SK-N-SH (cell line): ENCODE measurements at regions of chr2 and their contacts with region 1.

Region 1: DNA sequence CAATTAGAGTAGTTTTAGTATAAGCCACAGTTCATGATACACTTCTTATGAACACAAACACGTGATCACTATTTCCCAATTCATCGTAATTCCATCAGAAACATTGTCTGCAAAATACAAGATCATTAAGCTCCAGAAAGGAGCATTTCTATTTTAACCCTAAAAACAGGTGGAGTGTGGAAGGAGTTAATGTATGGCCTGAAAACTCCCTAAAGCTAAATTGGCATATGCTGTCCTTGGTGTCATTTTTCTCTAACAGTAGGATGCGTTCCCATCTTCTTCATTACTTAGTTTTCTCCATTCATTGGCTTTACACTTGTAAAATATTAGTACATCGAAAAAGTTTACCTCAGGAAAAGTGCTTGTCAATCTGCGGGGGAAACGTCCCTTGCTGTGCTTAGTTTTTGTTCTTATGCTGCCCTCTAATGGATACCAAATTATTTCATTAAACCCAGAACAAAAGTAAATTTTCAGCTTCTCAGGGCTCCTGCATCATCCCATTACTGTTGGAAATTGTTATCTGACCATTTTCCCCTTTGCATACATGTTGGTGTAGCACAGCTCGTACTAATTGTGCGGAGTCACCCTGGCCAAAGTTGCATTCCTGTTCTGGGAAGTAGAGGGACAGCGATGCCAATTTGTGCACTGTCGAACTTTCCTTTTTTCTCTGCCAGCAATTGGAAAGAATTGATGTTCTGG is 153.4 kb downstream of the GPD2 start:
- DNase-seq: peak; percentile 15
- H3K4me3 ChIP-seq: no peak overlapping the region
- H3K27ac ChIP-seq: no peak overlapping the region
- H3K4me1 ChIP-seq: no peaks in the 10 kb centered on the region
- H3K27me3 ChIP-seq: no peaks in the 10 kb centered on the region
- CTCF ChIP-seq: peak; percentile 72
- EP300 ChIP-seq: no peak
- RAD21 ChIP-seq: peak; percentile 86

Region 2: DNA sequence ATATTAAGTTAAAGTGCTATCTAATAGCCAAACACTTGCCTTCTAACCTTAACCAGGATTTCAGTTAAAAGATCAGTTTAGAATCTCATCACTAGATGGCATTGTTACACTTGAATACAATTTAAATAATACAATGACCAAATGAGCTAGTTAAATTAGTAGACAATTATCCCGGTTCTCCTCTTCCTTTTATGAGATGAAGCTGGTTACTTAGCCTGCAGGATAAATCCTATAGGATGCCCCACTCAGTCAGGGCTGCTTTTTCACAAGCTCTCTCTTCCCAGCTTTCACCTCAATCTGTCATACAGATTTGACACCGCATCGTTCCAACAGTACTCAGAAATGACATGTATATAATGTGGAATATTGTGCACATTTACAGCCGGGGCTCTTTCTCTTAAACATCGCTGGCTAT is 1212.3 kb before region 1 on chr2:
- CTCF ChIA-PET with region 1: interaction called, 24 read pairs
- POLR2A ChIA-PET with region 1: no interaction called
- DNase-seq: no peak
- H3K4me3 ChIP-seq: no peak overlapping the region
- H3K27ac ChIP-seq: no peak overlapping the region
- H3K4me1 ChIP-seq: no peaks in the 10 kb centered on the region
- H3K27me3 ChIP-seq: no peaks in the 10 kb centered on the region
- CTCF ChIP-seq: peak; percentile 60
- EP300 ChIP-seq: no peak
- RAD21 ChIP-seq: peak; percentile 65

Region 3: DNA sequence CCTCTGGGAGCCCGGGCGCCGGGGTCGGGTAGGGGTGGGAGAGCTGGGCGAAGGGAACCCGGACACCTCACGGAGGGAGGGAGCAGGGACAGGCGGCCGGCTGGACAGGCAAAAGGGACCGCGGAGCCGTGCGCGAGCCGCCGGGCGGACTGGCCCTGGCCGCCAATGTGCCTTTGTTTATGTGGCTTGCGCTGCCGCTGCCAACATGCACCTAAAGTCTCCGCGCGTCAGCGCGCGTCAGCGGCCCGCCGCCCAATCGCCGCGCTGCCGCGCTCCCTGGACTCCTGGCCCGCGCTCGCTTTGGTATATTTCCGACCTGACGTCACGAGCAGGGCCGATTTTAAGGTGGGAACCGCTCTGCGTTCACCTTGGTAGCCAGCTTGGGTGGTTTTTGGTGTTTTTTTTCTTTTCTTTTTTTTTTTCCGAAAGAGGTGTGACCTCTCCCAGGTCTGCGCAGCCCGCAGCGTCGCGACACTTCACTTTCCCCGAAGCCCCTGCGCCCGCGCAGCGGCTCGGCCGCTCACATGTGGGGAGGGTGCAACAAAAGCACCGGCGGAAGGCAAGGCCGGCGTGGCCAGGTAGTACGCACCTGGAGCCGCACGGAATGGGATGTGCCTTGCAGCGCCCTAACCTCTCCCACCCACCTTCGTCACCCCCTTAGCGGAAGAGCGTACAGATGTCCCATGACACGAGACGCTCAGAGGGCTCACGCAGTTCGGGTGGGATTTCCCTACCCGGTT is 256.8 kb before region 1 on chr2 and contains the start of gene NR4A2:
- CTCF ChIA-PET with region 1: interaction called, 87 read pairs
- POLR2A ChIA-PET with region 1: no interaction called
- DNase-seq: peak; percentile 80
- H3K4me3 ChIP-seq: peak within 1 kb of the TSS; percentile 60 to 75
- H3K27ac ChIP-seq: peak within 1 kb of the TSS in 1 of 2 experiments; percentile 93; a peak in 1 of 4 replicates
- H3K4me1 ChIP-seq: peaks cover 6 to 19% of the 10 kb centered on the region in 2 experiments; a peak in 3 of 4 replicates
- H3K27me3 ChIP-seq: peaks cover 44% of the 10 kb centered on the region
- CTCF ChIP-seq: no peak
- EP300 ChIP-seq: no peak
- RAD21 ChIP-seq: no peak
- polyA plus RNA-seq, gene NR4A2: 13.9 and 16.2 TPM in 2 replicates

Region 4: GRCh38 chr2:156505696-156506095 is 83.8 kb before region 1 on chr2:
- CTCF ChIA-PET with region 1: no interaction called
- POLR2A ChIA-PET with region 1: no interaction called
- DNase-seq: no peak
- H3K4me3 ChIP-seq: no peak overlapping the region
- H3K27ac ChIP-seq: no peak overlapping the region
- H3K4me1 ChIP-seq: no peaks in the 10 kb centered on the region
- H3K27me3 ChIP-seq: no peaks in the 10 kb centered on the region
- CTCF ChIP-seq: no peak
- EP300 ChIP-seq: no peak
- RAD21 ChIP-seq: no peak

Region 5: GRCh38 chr2:156537141-156537540 is 52.4 kb before region 1 on chr2:
- CTCF ChIA-PET with region 1: no interaction called
- POLR2A ChIA-PET with region 1: no interaction called
- DNase-seq: no peak
- H3K4me3 ChIP-seq: no peak overlapping the region; a peak in 1 of 4 replicates
- H3K27ac ChIP-seq: peak overlapping the region in 1 of 2 experiments; percentile 43; a peak in 3 of 4 replicates
- H3K4me1 ChIP-seq: peaks cover 6 to 7% of the 10 kb centered on the region in 2 experiments; a peak in 2 of 4 replicates
- H3K27me3 ChIP-seq: no peaks in the 10 kb centered on the region
- CTCF ChIP-seq: no peak
- EP300 ChIP-seq: peak; percentile 10 to 15; a peak in 1 of 4 replicates
- RAD21 ChIP-seq: no peak

Region 6: GRCh38 chr2:156602552-156602933 is 13.0 kb after region 1 on chr2:
- CTCF ChIA-PET with region 1: interaction called, 11 read pairs
- POLR2A ChIA-PET with region 1: no interaction called
- DNase-seq: no peak
- H3K4me3 ChIP-seq: no peak overlapping the region
- H3K27ac ChIP-seq: no peak overlapping the region
- H3K4me1 ChIP-seq: no peaks in the 10 kb centered on the region
- H3K27me3 ChIP-seq: no peaks in the 10 kb centered on the region; the same call in 1 of the 2 replicates
- CTCF ChIP-seq: no peak
- EP300 ChIP-seq: no peak
- RAD21 ChIP-seq: no peak